OCI-LY7 (cell line): ENCODE measurements at regions of chr3 and their contacts with region 1.

Region 1: GRCh38 chr3:133475245-133476010 is 75.6 kb downstream of the BFSP2 start:
- DNase-seq: peak; percentile 95
- H3K4me3 ChIP-seq: peak overlapping the region; percentile 57
- H3K27ac ChIP-seq: peak overlapping the region; percentile 98
- H3K4me1 ChIP-seq: peaks cover 98% of the 10 kb centered on the region
- CTCF ChIP-seq: no peak

Region 2: GRCh38 chr3:133464573-133464972 is 10.9 kb before region 1 on chr3:
- CTCF ChIA-PET with region 1: interaction called, 14 read pairs
- POLR2A ChIA-PET with region 1: interaction called, 166 read pairs
- intact Hi-C with region 1: loop called (anchors 1 kb)
- DNase-seq: peak; percentile 77
- H3K4me3 ChIP-seq: no peak overlapping the region
- H3K27ac ChIP-seq: peak overlapping the region; percentile 96
- H3K4me1 ChIP-seq: peaks cover 94% of the 10 kb centered on the region
- CTCF ChIP-seq: peak; percentile 82

Region 3: DNA sequence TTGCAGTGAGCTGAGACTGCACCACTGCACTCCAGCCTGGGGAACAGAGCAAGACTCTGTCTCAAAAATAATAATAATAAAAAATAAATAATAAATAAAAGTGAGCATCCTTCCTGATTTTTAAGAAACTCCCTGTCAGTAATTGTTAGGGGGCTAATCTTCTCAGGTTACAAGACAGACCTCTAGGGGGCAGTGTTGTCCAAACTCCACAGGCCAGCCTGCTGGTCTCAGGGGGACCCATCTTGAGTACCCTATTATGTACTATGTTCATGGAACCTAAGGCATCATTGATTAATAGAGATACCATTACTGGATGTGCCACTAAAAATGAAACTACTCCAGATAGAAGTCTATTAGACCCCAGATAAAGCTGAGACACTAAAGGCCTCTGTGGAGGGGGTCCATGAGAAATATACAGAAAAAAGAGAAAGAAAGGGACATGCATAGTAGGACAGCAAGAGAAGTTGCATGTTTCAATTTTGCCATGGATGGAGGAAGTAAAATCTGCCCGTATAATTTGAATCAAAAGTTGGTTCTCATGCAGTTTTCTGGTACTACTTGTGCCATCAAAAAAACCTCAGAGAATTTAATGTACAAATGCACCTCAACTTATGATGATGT is 12.6 kb after region 1 on chr3:
- CTCF ChIA-PET with region 1: interaction called, 20 read pairs
- POLR2A ChIA-PET with region 1: interaction called, 196 read pairs
- intact Hi-C with region 1: loop called (anchors 1 kb)
- DNase-seq: no peak
- H3K4me3 ChIP-seq: peak overlapping the region; percentile 61
- H3K27ac ChIP-seq: peak overlapping the region; percentile 92
- H3K4me1 ChIP-seq: peaks cover 49% of the 10 kb centered on the region
- CTCF ChIP-seq: peak; percentile 74

Region 4: GRCh38 chr3:133494469-133494868 is 19.0 kb after region 1 on chr3:
- CTCF ChIA-PET with region 1: interaction called, 20 read pairs
- POLR2A ChIA-PET with region 1: interaction called, 196 read pairs
- intact Hi-C with region 1: loop called (anchors 1 kb)
- DNase-seq: peak; percentile 59
- H3K4me3 ChIP-seq: no peak overlapping the region
- H3K27ac ChIP-seq: peak overlapping the region; percentile 0
- H3K4me1 ChIP-seq: peaks cover 57% of the 10 kb centered on the region
- CTCF ChIP-seq: peak; percentile 75

Region 5: GRCh38 chr3:133578548-133579191 is 103.2 kb after region 1 on chr3:
- CTCF ChIA-PET with region 1: interaction called, 9 read pairs
- POLR2A ChIA-PET with region 1: interaction called, 51 read pairs
- intact Hi-C with region 1: loop called (anchors 1 kb)
- DNase-seq: peak; percentile 23
- H3K4me3 ChIP-seq: peak overlapping the region; percentile 87
- H3K27ac ChIP-seq: peak overlapping the region; percentile 31
- H3K4me1 ChIP-seq: peaks cover 60% of the 10 kb centered on the region
- CTCF ChIP-seq: peak; percentile 88